ENCODE measurements at regions of chr7 and their contacts with region 1.

Region 1: GRCh38 chr7:23055582-23056178 is 41.8 kb upstream of the HYCC1 start:
- DNase-seq: peak; percentile 60
- ATAC-seq: peak; percentile 99
- H3K4me3 ChIP-seq: no peak overlapping the region
- H3K27ac ChIP-seq: no peak overlapping the region
- H3K4me1 ChIP-seq: no peaks in the 10 kb centered on the region
- H3K27me3 ChIP-seq: no peaks in the 10 kb centered on the region
- CTCF ChIP-seq: peak; percentile 86 to 95 (median 94)
- EP300 ChIP-seq: no peak
- POLR2A ChIP-seq: no peak
- RAD21 ChIP-seq: peak; percentile 99

Region 2: DNA sequence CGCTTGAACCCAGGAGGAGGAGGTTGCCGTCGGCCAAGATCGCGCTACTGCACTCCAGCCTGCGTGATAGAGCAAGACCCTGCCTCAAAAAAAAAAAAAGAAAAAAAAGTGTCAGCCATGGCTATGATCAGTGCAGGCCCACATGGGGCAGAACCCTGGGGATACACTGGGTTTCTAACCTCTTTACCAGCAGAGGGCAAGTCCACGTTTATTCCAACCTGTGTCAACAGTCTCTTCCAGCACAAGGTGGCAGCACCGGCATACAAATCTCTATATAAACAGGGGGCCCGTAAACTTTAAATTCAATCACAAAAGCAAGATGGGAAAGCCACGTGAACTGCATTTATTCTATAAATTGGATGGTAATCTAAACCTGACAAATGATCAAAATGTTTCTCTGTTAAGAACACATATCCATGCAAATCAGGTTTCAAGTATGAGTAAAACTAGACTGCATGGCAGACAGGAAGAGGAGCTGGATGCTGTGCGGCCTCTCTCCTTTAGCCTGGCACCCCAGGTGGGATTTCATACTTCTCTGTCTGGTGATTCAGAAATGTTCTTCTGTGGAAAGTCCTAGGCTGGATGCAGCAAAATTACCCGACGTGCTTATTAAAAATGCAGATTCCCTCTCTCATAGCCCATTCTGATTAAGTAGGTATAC is 495.7 kb before region 1 on chr7:
- CTCF ChIA-PET with region 1: interaction called, 75 read pairs
- POLR2A ChIA-PET with region 1: no interaction called
- RAD21 ChIA-PET with region 1: interaction called, 38 read pairs
- SMC1A ChIA-PET with region 1: interaction called, 77 read pairs
- in situ Hi-C with region 1: loop called (anchors 5 kb)
- intact Hi-C with region 1: loop called (anchors 2 kb)
- DNase-seq: no peak
- ATAC-seq: peak; percentile 88
- H3K4me3 ChIP-seq: no peak overlapping the region
- H3K27ac ChIP-seq: no peak overlapping the region
- H3K4me1 ChIP-seq: peaks cover 34% of the 10 kb centered on the region
- H3K27me3 ChIP-seq: no peaks in the 10 kb centered on the region; a peak in 1 of 4 replicates
- CTCF ChIP-seq: peak; percentile 78 to 97 (median 86)
- EP300 ChIP-seq: no peak
- POLR2A ChIP-seq: no peak
- RAD21 ChIP-seq: peak; percentile 96

Region 3: DNA sequence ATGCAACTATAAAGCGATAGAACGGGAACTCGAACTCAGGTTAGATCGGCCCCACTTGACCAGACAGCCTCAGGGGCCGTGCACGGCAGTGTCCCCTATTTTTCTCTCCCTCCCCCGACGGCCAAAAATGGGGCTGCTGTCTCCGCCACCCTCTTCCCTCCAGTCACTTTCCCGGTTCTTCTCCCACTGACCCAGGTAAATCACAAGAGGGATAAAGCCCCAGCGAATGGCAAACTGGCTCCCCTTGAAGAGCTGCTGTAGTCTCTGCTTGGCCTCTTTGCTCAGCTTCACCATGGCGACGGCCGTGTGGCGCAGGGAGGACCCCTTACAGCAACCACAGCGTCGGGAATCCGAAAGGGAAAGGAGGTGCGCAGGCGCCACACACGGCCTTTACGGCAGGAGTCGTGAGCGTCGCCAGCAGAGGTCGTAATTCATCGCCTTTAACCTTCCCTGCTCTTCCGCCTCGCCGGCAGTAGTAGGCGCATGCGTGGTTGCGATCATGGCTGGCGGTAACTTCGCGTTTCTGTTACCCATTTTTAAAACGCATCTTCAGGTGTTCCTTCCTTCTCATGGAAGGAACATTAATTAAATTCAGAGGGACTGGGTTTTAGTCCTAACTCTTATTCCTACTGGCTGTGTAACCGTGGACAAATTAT is 233.1 kb before region 1 on chr7 and contains the start of gene TOMM7:
- CTCF ChIA-PET with region 1: interaction called, 73 read pairs
- POLR2A ChIA-PET with region 1: interaction called, 3 read pairs
- RAD21 ChIA-PET with region 1: interaction called, 50 read pairs
- SMC1A ChIA-PET with region 1: interaction called, 63 read pairs
- in situ Hi-C with region 1: no loop called
- intact Hi-C with region 1: no loop called
- DNase-seq: peak; percentile 94
- ATAC-seq: peak; percentile 92
- H3K4me3 ChIP-seq: peak within 1 kb of the TSS; percentile 84
- H3K27ac ChIP-seq: peak within 1 kb of the TSS; percentile 77
- H3K4me1 ChIP-seq: peaks cover 4% of the 10 kb centered on the region
- H3K27me3 ChIP-seq: no peaks in the 10 kb centered on the region
- CTCF ChIP-seq: peak; percentile 35 to 61 (median 36); a peak in 4 of 6 replicates
- EP300 ChIP-seq: no peak
- POLR2A ChIP-seq: peak; percentile 89
- RAD21 ChIP-seq: peak; percentile 14; the same call in 1 of the 2 replicates
- polyA plus RNA-seq, gene TOMM7: 368 to 461 TPM

Region 4: DNA sequence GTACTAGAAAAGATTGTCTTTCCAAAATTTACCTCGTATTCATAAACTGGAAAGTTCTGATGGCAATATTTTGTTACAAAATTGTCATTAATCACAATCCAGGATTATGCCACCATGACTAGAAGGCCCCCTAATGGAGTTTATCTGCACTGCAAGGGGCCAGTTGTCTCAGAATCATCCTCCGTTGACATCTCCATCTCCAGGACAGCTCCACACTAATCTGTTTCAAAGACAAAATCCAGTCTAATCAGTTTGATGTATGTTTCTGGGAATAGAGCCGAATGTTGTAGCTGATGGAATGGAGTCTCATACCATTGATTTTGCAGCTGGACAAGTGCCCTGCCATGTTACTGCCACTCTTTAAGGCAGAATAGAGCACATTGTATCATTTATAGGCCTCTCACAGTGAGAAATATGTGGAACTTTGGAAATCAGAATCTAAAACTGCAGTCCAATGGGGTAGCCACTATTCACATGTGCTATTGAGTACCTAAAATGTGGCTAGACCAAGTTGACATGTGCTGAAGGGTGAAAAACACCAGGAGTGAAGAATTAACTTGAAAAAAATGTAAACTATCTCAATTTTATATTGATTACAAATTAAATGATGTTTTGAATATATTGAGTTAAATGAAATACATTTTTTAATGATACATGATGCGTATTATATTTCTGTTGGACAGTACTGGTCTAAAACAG is 194.7 kb before region 1 on chr7:
- CTCF ChIA-PET with region 1: interaction called, 40 read pairs
- POLR2A ChIA-PET with region 1: no interaction called
- RAD21 ChIA-PET with region 1: interaction called, 46 read pairs
- SMC1A ChIA-PET with region 1: interaction called, 37 read pairs
- in situ Hi-C with region 1: no loop called
- intact Hi-C with region 1: no loop called
- DNase-seq: no peak
- ATAC-seq: no peak
- H3K4me3 ChIP-seq: no peak overlapping the region
- H3K27ac ChIP-seq: peak overlapping the region; percentile 1; the same call in 1 of the 2 replicates
- H3K4me1 ChIP-seq: peaks cover 10% of the 10 kb centered on the region
- H3K27me3 ChIP-seq: no peaks in the 10 kb centered on the region
- CTCF ChIP-seq: peak; percentile 20 to 59 (median 59); a peak in 5 of 6 replicates
- EP300 ChIP-seq: no peak
- POLR2A ChIP-seq: no peak
- RAD21 ChIP-seq: no peak

Region 5: DNA sequence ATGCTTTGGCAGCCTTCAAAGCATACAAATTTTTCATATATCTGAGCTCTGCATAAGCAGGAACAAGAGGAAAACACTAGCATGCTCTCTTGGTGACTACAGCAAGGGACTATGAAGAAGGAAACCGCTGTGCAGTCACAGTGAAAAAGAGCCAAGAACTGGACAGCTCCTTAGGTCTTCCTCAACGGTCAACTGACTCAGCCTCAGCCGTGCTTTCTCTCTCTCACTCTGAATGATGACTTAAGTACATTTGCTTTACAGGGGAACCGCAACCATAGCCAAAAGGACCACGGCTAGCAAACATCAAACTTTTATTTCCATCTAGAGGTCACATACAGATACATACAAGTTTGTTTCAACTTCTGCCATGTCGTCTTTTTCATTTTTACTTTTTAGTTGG is 111.7 kb before region 1 on chr7:
- CTCF ChIA-PET with region 1: interaction called, 30 read pairs
- POLR2A ChIA-PET with region 1: no interaction called
- RAD21 ChIA-PET with region 1: interaction called, 4 read pairs
- SMC1A ChIA-PET with region 1: interaction called, 18 read pairs
- in situ Hi-C with region 1: no loop called
- intact Hi-C with region 1: no loop called
- DNase-seq: no peak
- ATAC-seq: no peak
- H3K4me3 ChIP-seq: no peak overlapping the region
- H3K27ac ChIP-seq: no peak overlapping the region
- H3K4me1 ChIP-seq: no peaks in the 10 kb centered on the region
- H3K27me3 ChIP-seq: no peaks in the 10 kb centered on the region
- CTCF ChIP-seq: no peak
- EP300 ChIP-seq: no peak
- POLR2A ChIP-seq: no peak
- RAD21 ChIP-seq: no peak

Region 6: GRCh38 chr7:22992874-22993840 is 62.5 kb before region 1 on chr7:
- CTCF ChIA-PET with region 1: interaction called, 5 read pairs
- POLR2A ChIA-PET with region 1: no interaction called
- RAD21 ChIA-PET with region 1: interaction called, 13 read pairs
- SMC1A ChIA-PET with region 1: interaction called, 16 read pairs
- in situ Hi-C with region 1: no loop called
- intact Hi-C with region 1: no loop called
- DNase-seq: peak; percentile 65
- ATAC-seq: peak; percentile 85
- H3K4me3 ChIP-seq: peak overlapping the region; percentile 50
- H3K27ac ChIP-seq: peak overlapping the region; percentile 68
- H3K4me1 ChIP-seq: peaks cover 29% of the 10 kb centered on the region
- H3K27me3 ChIP-seq: no peaks in the 10 kb centered on the region
- CTCF ChIP-seq: no peak
- EP300 ChIP-seq: peak in 1 of 2 experiments; percentile 19; a peak in 1 of 4 replicates
- POLR2A ChIP-seq: no peak
- RAD21 ChIP-seq: no peak

Region 7: GRCh38 chr7:23026164-23026563 is 29.5 kb before region 1 on chr7:
- CTCF ChIA-PET with region 1: interaction called, 17 read pairs
- POLR2A ChIA-PET with region 1: interaction called, 4 read pairs
- RAD21 ChIA-PET with region 1: interaction called, 7 read pairs
- SMC1A ChIA-PET with region 1: interaction called, 16 read pairs
- in situ Hi-C with region 1: no loop called
- intact Hi-C with region 1: no loop called
- DNase-seq: no peak
- ATAC-seq: no peak
- H3K4me3 ChIP-seq: no peak overlapping the region
- H3K27ac ChIP-seq: no peak overlapping the region
- H3K4me1 ChIP-seq: no peaks in the 10 kb centered on the region
- H3K27me3 ChIP-seq: no peaks in the 10 kb centered on the region
- CTCF ChIP-seq: no peak
- EP300 ChIP-seq: no peak
- POLR2A ChIP-seq: no peak
- RAD21 ChIP-seq: no peak